AG04449 (cell line): ENCODE measurements at regions of chr6 and their contacts with region 1.

Region 1: GRCh38 chr6:161418463-161418945 is 144.6 kb upstream of the AGPAT4 start:
- DNase-seq: peak; percentile 59
- H3K4me3 ChIP-seq: no peak overlapping the region
- CTCF ChIP-seq: peak; percentile 55

Region 2: DNA sequence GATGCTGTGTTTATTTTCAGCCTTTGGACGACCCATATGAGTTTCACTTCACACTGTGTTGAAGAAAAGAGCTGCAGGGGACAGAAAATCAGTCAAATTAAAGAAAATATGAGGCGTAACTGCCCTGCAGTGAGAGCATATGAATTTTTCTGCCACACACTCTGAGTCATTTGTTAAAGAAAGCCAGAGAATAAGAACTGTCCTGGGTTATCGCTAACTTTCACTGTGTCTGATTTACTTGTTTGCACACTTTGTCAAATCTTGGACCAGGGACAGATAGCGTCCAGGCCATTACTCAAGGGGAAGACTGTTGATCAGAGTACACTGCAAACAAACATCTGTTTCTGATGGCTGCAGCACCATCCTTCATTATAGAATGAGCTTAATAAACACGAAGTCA is 17.8 kb before region 1 on chr6:
- CTCF ChIA-PET with region 1: interaction called, 45 read pairs
- POLR2A ChIA-PET with region 1: no interaction called
- DNase-seq: no peak
- H3K4me3 ChIP-seq: no peak overlapping the region
- CTCF ChIP-seq: no peak

Region 3: DNA sequence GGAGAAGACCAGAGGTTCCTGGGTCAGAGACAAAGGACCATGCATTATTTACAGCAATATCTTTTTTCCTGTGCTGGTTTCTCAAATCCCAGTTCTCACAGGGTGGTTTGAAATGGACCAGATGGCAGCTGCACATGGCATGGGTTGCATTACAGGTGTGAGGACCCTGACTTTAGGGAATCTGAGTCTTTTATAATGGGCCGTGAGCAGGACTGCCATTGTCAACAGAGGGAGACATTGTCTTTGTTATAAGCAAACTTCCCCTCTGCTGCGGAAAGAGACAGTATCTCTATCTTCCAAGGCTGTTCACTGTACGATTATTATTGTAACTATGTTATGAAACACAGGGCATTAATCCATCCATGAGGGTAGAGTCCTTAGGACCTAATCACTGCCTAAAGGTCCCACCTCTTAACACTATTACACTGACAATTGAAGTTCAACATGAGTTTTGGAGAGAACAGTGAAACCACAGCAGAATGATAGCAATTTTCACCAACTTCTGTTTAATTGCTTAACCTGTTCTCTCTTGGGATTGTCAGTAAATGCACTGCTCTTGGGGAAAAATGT is 11.5 kb after region 1 on chr6:
- CTCF ChIA-PET with region 1: interaction called, 34 read pairs
- POLR2A ChIA-PET with region 1: no interaction called
- DNase-seq: no peak
- H3K4me3 ChIP-seq: no peak overlapping the region
- CTCF ChIP-seq: no peak

Region 4: DNA sequence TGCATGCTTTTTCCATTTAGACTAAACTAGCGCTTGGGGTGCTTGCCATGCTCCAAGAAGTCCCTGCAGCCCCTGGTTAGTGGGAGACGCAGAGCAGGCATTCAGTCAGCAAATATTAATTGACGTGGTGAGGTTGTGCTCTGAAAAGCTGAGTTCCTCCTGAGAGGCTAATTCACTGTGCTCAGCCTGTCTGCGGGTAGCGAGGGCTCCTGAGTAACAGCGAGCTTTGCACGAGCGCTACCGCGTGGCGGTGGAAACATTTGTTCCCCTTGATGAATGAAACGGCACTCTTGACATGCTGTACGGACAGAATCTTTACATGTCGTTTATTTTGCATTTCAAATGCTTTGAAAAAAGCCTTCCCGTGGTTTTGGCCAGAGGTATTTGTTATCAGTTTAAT is 26.0 kb after region 1 on chr6:
- CTCF ChIA-PET with region 1: interaction called, 24 read pairs
- POLR2A ChIA-PET with region 1: no interaction called
- DNase-seq: no peak
- H3K4me3 ChIP-seq: no peak overlapping the region
- CTCF ChIP-seq: peak; percentile 16

Region 5: GRCh38 chr6:161498359-161498758 is 79.9 kb after region 1 on chr6:
- CTCF ChIA-PET with region 1: interaction called, 39 read pairs
- POLR2A ChIA-PET with region 1: no interaction called
- DNase-seq: no peak
- H3K4me3 ChIP-seq: no peak overlapping the region
- CTCF ChIP-seq: peak; percentile 25

Region 6: GRCh38 chr6:161694995-161695394 is 276.5 kb after region 1 on chr6:
- CTCF ChIA-PET with region 1: interaction called, 22 read pairs
- POLR2A ChIA-PET with region 1: no interaction called
- DNase-seq: no peak
- H3K4me3 ChIP-seq: no peak overlapping the region
- CTCF ChIP-seq: peak; percentile 40